Left lung (tissue), 14 donors: ENCODE measurements at regions of chr11 and their contacts with region 1.

Region 1: DNA sequence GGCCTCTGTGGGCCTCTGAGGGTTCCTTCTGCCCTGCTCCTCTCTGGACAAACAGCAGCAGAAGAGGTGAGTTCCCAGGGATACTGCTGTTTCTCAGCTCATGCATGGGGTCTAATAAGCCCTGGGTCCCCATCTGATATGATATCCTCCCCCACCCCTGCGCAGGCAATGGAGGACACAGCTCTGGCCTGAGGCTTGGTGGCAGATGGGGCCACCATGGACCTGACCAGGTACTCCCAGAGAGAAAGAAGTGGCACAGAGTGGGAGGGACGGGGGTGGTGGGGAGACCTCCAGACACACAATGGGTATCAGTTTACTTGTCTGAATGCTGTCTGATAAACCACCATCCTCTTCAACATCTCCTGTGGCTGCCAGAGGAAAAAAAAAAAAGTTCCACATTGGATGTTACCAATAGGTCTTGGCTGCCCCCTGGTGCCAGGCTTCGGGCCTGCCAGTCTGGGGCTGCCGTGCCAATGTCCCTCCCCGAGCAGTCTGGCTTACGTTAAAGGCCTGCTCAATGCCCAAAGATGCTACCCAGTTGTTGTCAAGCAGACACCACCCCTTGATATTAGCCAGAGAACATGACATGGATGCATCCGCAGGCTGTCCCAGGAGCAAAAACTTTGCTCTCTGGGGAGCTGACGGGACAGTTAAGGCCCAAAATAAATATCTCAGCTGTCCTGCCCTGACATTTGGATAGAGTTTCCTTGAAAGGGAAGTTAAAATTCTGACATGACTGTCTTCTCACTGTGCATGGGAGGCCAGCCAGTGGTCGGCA is 27.9 kb upstream of the ABCC8 start:
- DNase-seq: peak; percentile 38 to 90 (median 71)
- ATAC-seq: peak; percentile 95
- H3K4me3 ChIP-seq: no peak overlapping the region
- H3K27ac ChIP-seq: no peak overlapping the region
- H3K4me1 ChIP-seq: no peaks in the 10 kb centered on the region
- H3K27me3 ChIP-seq: no peaks in the 10 kb centered on the region
- CTCF ChIP-seq: peak; percentile 89 to 95

Region 2: GRCh38 chr11:17384002-17384511 is 120.5 kb before region 1 on chr11:
- intact Hi-C with region 1: loop called (anchors 2 to 10 kb)
- DNase-seq: peak; percentile 60 to 91 (median 80)
- ATAC-seq: peak; percentile 57
- H3K4me3 ChIP-seq: no peak overlapping the region
- H3K27ac ChIP-seq: no peak overlapping the region
- H3K4me1 ChIP-seq: peaks cover 0 to 11% of the 10 kb centered on the region in 2 donors
- H3K27me3 ChIP-seq: peaks cover 0 to 16% of the 10 kb centered on the region in 2 donors
- CTCF ChIP-seq: peak; percentile 83 to 86